Naive thymus-derived CD4-positive, alpha-beta T cell (primary cell): ENCODE measurements at regions of chr7 and their contacts with region 1.

Region 1: DNA sequence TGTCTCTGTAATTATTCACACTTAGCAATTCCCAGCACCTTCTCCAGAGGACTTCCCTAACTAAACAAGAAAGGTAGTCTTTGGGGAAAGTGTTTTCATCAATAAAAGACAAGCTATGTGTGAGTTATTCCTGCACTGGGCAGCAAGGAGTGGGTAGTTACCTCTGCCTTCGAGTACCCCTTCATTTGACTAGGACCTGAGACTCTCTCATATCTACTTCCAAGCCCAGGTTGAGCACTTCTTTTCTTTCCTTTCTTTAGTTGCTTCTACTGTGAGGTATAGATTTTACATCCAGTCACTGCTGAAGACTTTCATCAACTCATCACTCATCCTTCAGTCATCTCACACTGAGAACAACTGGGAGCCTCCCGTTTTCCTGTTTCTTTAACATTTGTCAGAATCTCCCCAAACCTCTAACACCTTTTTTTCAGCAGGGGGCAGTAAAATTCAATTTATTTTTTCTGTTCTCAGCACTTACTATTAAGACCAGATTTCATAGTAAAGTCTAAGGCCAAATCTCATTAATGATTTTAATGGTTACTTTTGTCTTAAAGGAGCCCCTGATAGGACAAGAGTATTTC is 80.1 kb upstream of the PRSS1 start:
- DNase-seq: peak in 5 of 9 donors; percentile 14 to 40 (median 29)
- ATAC-seq: no peak
- H3K4me3 ChIP-seq: no peak overlapping the region
- H3K4me3 Mint-ChIP-seq: peak overlapping the region in 6 of 10 donors; percentile 15 to 64 (median 32)
- H3K27ac ChIP-seq: no peak overlapping the region
- H3K27ac Mint-ChIP-seq: peak overlapping the region in 7 of 9 donors; percentile 3 to 73 (median 49)
- H3K4me1 ChIP-seq: peaks cover 0 to 14% of the 10 kb centered on the region in 2 donors
- H3K4me1 Mint-ChIP-seq: peaks cover 11 to 34% (median 34%) of the 10 kb centered on the region in 7 donors
- H3K27me3 ChIP-seq: no peaks in the 10 kb centered on the region
- H3K27me3 Mint-ChIP-seq: no peaks in the 10 kb centered on the region

Region 2: DNA sequence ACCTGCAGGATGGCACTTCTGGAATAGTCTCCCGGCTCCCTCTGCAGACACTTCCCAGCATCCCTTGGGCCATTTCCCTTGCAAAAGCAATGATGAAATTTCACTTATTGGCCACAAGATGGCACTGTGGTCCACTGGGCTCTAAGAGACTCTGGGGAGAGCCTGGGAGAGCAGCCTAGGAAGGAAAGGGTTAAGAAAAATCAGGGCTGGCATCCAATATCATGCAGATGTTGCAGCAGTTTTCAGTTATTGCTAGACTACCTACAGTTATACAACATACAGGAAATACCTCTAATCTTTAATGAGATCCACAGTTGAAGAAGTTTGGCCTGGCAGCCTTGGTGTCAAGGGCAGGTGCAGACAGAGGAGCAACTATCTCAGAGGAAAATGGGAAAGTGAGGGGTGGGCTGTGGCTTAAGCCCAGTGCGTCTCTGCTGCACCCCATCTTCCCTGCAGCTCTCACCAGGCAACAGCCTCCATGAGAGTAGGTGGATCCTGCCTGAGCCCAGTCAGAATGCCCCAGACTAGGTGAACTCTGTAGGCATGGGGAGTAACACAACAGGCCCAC is 311.1 kb before region 1 on chr7:
- CTCF ChIA-PET with region 1: no interaction called
- POLR2A ChIA-PET with region 1: no interaction called
- intact Hi-C with region 1: no loop called
- DNase-seq: peak in 8 of 9 donors; percentile 29 to 56 (median 44)
- ATAC-seq: peak; percentile 71
- H3K4me3 ChIP-seq: no peak overlapping the region
- H3K4me3 Mint-ChIP-seq: peak overlapping the region in 2 of 10 donors; percentile 21 to 26
- H3K27ac ChIP-seq: no peak overlapping the region
- H3K27ac Mint-ChIP-seq: peak overlapping the region in 5 of 9 donors; percentile 10 to 68 (median 35)
- H3K4me1 ChIP-seq: peaks cover 0 to 30% of the 10 kb centered on the region in 2 donors
- H3K4me1 Mint-ChIP-seq: peaks cover 13 to 58% (median 47%) of the 10 kb centered on the region in 7 donors
- H3K27me3 ChIP-seq: no peaks in the 10 kb centered on the region
- H3K27me3 Mint-ChIP-seq: peaks cover 0 to 39% (median 0%) of the 10 kb centered on the region in 5 donors

Region 3: DNA sequence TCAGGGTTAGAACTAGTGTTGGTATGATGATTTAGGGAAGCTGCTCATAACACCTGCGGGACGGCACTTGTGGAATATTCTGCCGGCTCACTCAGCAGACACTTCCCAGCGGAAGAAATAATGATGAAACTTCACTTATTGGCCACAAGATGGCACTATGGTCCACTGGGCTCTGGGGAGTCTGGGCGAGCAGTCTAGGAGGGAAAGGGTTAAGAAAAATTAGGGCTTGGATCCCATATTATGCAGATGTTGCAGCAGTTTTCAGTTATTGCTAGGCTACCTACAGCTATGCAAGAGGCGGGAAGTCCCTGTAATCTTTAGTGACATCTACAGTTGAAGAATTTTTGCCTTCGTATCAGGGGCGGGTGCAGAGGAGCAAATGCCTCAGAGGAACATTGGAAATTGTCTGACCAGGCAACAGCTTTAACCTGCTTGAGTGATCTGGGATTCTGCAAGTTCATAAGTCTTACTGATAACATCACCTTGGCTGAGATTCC is 172.6 kb before region 1 on chr7:
- CTCF ChIA-PET with region 1: no interaction called
- POLR2A ChIA-PET with region 1: no interaction called
- intact Hi-C with region 1: no loop called
- DNase-seq: peak in 7 of 9 donors; percentile 39 to 58 (median 45)
- ATAC-seq: peak; percentile 71
- H3K4me3 ChIP-seq: peak overlapping the region; percentile 30
- H3K4me3 Mint-ChIP-seq: peak overlapping the region; percentile 41 to 85 (median 70)
- H3K27ac ChIP-seq: peak overlapping the region; percentile 64
- H3K27ac Mint-ChIP-seq: peak overlapping the region; percentile 33 to 93 (median 77)
- H3K4me1 ChIP-seq: peaks cover 5 to 46% of the 10 kb centered on the region in 2 donors
- H3K4me1 Mint-ChIP-seq: peaks cover 15 to 72% (median 65%) of the 10 kb centered on the region in 7 donors
- H3K27me3 ChIP-seq: no peaks in the 10 kb centered on the region
- H3K27me3 Mint-ChIP-seq: peaks cover 0 to 9% (median 0%) of the 10 kb centered on the region in 5 donors

Region 4: GRCh38 chr7:142711746-142712619 is 42.8 kb after region 1 on chr7:
- CTCF ChIA-PET with region 1: interaction called, 14 read pairs
- POLR2A ChIA-PET with region 1: interaction called, 9 read pairs
- intact Hi-C with region 1: loop called (anchors 1 to 5 kb)
- DNase-seq: no peak
- ATAC-seq: peak; percentile 75
- H3K4me3 ChIP-seq: peak overlapping the region; percentile 46
- H3K4me3 Mint-ChIP-seq: peak overlapping the region; percentile 76 to 94 (median 88)
- H3K27ac ChIP-seq: peak overlapping the region; percentile 62
- H3K27ac Mint-ChIP-seq: peak overlapping the region; percentile 81 to 96 (median 91)
- H3K4me1 ChIP-seq: peaks cover 31 to 50% of the 10 kb centered on the region in 2 donors
- H3K4me1 Mint-ChIP-seq: peaks cover 20 to 76% (median 63%) of the 10 kb centered on the region in 7 donors
- H3K27me3 ChIP-seq: no peaks in the 10 kb centered on the region
- H3K27me3 Mint-ChIP-seq: peaks cover 0 to 1% (median 0%) of the 10 kb centered on the region in 5 donors

Region 5: GRCh38 chr7:142835487-142835886 is 166.3 kb after region 1 on chr7:
- CTCF ChIA-PET with region 1: interaction called, 7 read pairs
- POLR2A ChIA-PET with region 1: no interaction called
- intact Hi-C with region 1: loop called in 1 of 2 experiments (anchors 1 kb)
- DNase-seq: peak in 5 of 9 donors; percentile 29 to 57 (median 42)
- ATAC-seq: no peak
- H3K4me3 ChIP-seq: no peak overlapping the region
- H3K4me3 Mint-ChIP-seq: peak overlapping the region in 5 of 10 donors; percentile 18 to 61 (median 45)
- H3K27ac ChIP-seq: no peak overlapping the region
- H3K27ac Mint-ChIP-seq: peak overlapping the region in 8 of 9 donors; percentile 15 to 88 (median 70)
- H3K4me1 ChIP-seq: no peaks in the 10 kb centered on the region
- H3K4me1 Mint-ChIP-seq: peaks cover 2 to 34% (median 16%) of the 10 kb centered on the region in 7 donors
- H3K27me3 ChIP-seq: no peaks in the 10 kb centered on the region
- H3K27me3 Mint-ChIP-seq: peaks cover 0 to 4% (median 0%) of the 10 kb centered on the region in 5 donors

Region 6: GRCh38 chr7:143008007-143008901 is 339.1 kb after region 1 on chr7:
- CTCF ChIA-PET with region 1: no interaction called
- POLR2A ChIA-PET with region 1: no interaction called
- intact Hi-C with region 1: no loop called
- DNase-seq: peak; percentile 57 to 85 (median 75)
- ATAC-seq: peak; percentile 98
- H3K4me3 ChIP-seq: no peak overlapping the region
- H3K4me3 Mint-ChIP-seq: no peak overlapping the region
- H3K27ac ChIP-seq: no peak overlapping the region
- H3K27ac Mint-ChIP-seq: peak overlapping the region in 1 of 9 donors; percentile 56
- H3K4me1 ChIP-seq: no peaks in the 10 kb centered on the region
- H3K4me1 Mint-ChIP-seq: peaks cover 3 to 8% (median 5%) of the 10 kb centered on the region in 7 donors
- H3K27me3 ChIP-seq: no peaks in the 10 kb centered on the region
- H3K27me3 Mint-ChIP-seq: peaks cover 0 to 24% (median 4%) of the 10 kb centered on the region in 5 donors